Caco-2 (cell line): ENCODE measurements at regions of chr12 and their contacts with region 1.

Region 1: GRCh38 chr12:11269607-11270006 is at the start of gene PRB3:
- DNase-seq: no peak
- H3K4me3 ChIP-seq: no peak within 1 kb of the TSS
- H3K4me3 Mint-ChIP-seq: no peak within 1 kb of the TSS
- H3K27ac Mint-ChIP-seq: no peak within 1 kb of the TSS
- H3K4me1 ChIP-seq: no peaks in the 10 kb centered on the region
- H3K4me1 Mint-ChIP-seq: no peaks in the 10 kb centered on the region
- H3K27me3 ChIP-seq: no peaks in the 10 kb centered on the region; the same call in 1 of the 2 replicates
- H3K27me3 Mint-ChIP-seq: peaks cover 14% of the 10 kb centered on the region
- CTCF ChIP-seq: no peak
- total RNA-seq, gene PRB3: not detected in 2 replicates

Region 2: GRCh38 chr12:11321980-11322379 is 52.4 kb after region 1 on chr12:
- CTCF ChIA-PET with region 1: no interaction called
- POLR2A ChIA-PET with region 1: no interaction called
- intact Hi-C with region 1: loop called (anchors 5 kb)
- DNase-seq: peak in 1 of 2 experiments; percentile 6
- H3K4me3 ChIP-seq: no peak overlapping the region
- H3K4me3 Mint-ChIP-seq: no peak overlapping the region
- H3K27ac Mint-ChIP-seq: no peak overlapping the region
- H3K4me1 ChIP-seq: peaks cover 12% of the 10 kb centered on the region
- H3K4me1 Mint-ChIP-seq: peaks cover 15% of the 10 kb centered on the region
- H3K27me3 ChIP-seq: no peaks in the 10 kb centered on the region
- H3K27me3 Mint-ChIP-seq: peaks cover 8% of the 10 kb centered on the region
- CTCF ChIP-seq: no peak